PC-9 (cell line): ENCODE measurements at regions of chr4 and their contacts with region 1.

Region 1: GRCh38 chr4:158949099-158949498 is 153.8 kb upstream of the RAPGEF2 start:
- DNase-seq: no peak
- H3K4me3 ChIP-seq: no peak overlapping the region
- H3K27ac ChIP-seq: no peak overlapping the region
- H3K4me1 ChIP-seq: no peaks in the 10 kb centered on the region
- H3K27me3 ChIP-seq: no peaks in the 10 kb centered on the region
- CTCF ChIP-seq: no peak

Region 2: DNA sequence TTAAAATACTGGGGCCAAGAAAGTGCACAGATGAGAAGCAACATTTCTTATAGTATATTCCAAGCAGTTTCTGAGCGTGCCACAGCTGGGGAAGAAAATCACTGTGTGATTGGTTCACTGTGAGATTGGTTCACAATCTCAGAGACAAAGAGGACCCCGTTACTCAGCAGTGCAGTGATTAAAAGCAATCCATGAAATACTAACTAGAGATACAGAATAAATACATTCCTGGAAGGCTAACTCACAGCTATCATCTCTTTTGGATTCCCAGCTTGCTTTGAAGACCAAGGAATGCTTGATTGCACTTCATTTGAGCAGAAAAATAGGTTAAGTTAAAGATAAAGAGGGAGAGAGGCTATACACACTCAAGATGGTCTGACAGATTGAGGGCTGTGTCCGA is 21.7 kb after region 1 on chr4:
- CTCF ChIA-PET with region 1: no interaction called
- POLR2A ChIA-PET with region 1: interaction called, 10 read pairs
- intact Hi-C with region 1: no loop called
- DNase-seq: no peak
- H3K4me3 ChIP-seq: no peak overlapping the region
- H3K27ac ChIP-seq: no peak overlapping the region
- H3K4me1 ChIP-seq: no peaks in the 10 kb centered on the region
- H3K27me3 ChIP-seq: no peaks in the 10 kb centered on the region
- CTCF ChIP-seq: no peak

Region 3: DNA sequence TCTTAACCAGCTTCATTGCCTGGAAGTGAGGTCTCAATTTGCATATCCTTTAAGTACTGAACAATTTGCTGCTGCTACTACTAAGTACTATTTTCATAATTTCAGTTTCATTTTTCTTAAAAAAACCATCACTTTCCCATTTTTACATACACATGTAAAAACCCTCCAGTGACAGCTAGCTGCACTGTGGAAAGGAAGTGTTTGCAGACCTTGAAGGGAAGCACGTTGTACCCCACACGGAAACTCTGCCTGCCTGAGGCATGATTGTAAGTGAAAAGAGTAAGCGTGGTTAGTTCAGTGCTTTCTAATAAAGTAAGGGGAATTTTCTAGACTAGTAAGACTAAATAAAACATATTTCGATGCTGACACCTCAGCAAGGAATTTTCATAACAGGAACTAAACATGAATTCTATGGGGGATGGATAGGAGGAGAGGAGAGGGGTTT is 257.4 kb after region 1 on chr4:
- CTCF ChIA-PET with region 1: no interaction called
- POLR2A ChIA-PET with region 1: no interaction called
- intact Hi-C with region 1: no loop called
- DNase-seq: no peak
- H3K4me3 ChIP-seq: no peak overlapping the region
- H3K27ac ChIP-seq: no peak overlapping the region
- H3K4me1 ChIP-seq: no peaks in the 10 kb centered on the region
- H3K27me3 ChIP-seq: no peaks in the 10 kb centered on the region
- CTCF ChIP-seq: no peak

Region 4: DNA sequence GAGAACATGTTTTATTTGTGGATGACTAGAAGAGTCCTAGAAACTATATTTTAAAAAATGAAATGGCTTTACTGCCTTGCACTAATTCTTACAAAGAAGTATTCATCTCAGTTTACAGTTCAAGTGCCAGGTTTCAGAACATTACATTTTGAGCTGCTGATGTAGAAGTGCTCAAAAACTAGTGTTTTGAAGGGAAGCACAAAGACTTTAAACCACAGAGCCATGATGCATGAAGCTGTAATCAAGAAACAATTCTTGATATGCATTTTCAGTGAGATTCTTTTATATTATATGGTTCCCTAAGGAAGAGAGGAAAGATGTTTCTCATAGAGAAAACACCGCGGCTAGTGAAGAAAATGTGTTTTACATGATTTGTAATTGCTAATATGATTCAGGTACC is 1316.7 kb after region 1 on chr4:
- CTCF ChIA-PET with region 1: no interaction called
- POLR2A ChIA-PET with region 1: no interaction called
- intact Hi-C with region 1: no loop called
- DNase-seq: no peak
- H3K4me3 ChIP-seq: no peak overlapping the region
- H3K27ac ChIP-seq: no peak overlapping the region
- H3K4me1 ChIP-seq: no peaks in the 10 kb centered on the region
- H3K27me3 ChIP-seq: no peaks in the 10 kb centered on the region
- CTCF ChIP-seq: no peak